ENCODE measurements at regions of chr17 and their contacts with region 1.

Region 1: DNA sequence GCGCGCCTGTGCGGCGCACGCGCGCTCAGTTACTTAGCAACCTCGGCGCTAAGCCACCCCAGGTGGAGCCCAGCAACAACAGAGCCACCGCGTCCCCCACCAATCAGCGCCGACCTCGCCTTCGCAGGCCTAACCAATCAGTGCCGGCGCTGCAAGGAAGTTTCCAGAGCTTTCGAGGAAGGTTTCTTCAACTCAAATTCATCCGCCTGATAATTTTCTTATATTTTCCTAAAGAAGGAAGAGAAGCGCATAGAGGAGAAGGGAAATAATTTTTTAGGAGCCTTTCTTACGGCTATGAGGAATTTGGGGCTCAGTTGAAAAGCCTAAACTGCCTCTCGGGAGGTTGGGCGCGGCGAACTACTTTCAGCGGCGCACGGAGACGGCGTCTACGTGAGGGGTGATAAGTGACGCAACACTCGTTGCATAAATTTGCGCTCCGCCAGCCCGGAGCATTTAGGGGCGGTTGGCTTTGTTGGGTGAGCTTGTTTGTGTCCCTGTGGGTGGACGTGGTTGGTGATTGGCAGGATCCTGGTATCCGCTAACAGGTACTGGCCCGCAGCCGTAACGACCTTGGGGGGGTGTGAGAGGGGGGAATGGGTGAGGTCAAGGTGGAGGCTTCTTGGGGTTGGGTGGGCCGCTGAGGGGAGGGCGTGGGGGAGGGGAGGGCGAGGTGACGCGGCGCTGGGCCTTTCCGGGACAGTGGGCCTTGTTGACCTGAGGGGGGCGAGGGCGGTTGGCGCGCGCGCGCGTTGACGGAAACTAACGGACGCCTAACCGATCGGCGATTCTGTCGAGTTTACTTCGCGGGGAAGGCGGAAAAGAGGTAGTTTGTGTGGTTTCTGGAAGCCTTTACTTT is at the start of gene UBB:
- DNase-seq: peak; percentile 98
- ATAC-seq: peak; percentile 98 to 99 (median 99)
- H3K4me3 ChIP-seq: peak within 1 kb of the TSS; percentile 45 to 83 (median 72)
- H3K27ac ChIP-seq: peak within 1 kb of the TSS; percentile 88 to 99 (median 95)
- H3K4me1 ChIP-seq: peaks cover 10 to 35% (median 25%) of the 10 kb centered on the region in 12 donors
- H3K27me3 ChIP-seq: no peaks in the 10 kb centered on the region
- CTCF ChIP-seq: peak in 3 of 12 donors; percentile 10 to 17 (median 13)
- POLR2A ChIP-seq: peak; percentile 70 to 97
- total RNA-seq, gene UBB: 665 to 2,180 (median 1,547) TPM

Region 2: DNA sequence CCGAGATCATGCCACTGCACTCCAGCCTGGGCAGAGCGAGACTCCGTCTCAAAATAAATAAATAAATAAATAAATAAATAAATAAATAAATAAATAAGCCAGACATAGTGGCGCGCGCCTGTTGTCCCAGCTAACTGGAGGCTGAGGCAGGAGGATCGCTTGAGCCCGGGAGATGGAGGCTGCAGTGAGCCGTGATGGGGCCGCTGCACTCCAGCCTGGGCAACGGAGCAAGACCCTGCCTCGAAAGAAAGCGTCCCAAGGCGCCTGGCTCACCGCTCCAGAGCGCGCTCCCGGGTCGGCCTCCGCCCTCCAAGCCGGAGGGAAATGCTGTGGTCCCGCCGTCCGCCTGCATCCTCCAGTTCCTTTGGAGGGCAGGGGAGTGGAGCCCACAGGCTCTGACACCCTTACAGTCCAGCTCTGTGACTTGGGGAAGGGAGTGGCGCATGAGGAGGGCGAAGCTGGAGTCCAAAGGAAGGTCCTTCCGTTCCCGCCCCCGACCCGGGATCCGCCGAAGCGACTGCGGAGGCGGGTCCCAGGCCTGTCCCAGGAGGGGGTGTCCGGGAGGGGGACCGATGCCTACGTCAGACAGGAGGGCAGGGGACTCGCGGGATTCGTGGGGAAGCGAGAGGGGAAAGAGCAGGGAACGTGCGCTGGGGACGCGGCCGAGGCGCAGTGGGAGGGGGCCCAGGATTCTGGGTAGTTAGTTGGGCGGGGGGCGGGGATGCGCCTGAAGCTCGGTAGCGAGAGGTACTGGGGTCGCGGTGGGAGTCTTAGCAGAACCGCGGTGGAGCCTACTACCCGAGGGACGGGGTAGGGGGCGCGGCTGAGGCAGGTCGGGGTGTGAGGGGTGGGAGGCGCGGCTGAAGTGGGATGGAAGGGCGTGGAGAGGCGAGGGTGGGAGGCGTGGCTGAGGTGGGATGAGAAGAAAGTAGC is 26.1 kb after region 1 on chr17:
- intact Hi-C with region 1: loop called in 1 of 10 experiments (anchors 1 kb)
- DNase-seq: peak; percentile 75 to 86 (median 78)
- ATAC-seq: peak; percentile 76 to 94 (median 82)
- H3K4me3 ChIP-seq: peak overlapping the region; percentile 36 to 79 (median 58)
- H3K27ac ChIP-seq: peak overlapping the region; percentile 37 to 92 (median 80)
- H3K4me1 ChIP-seq: peaks cover 0 to 20% (median 8%) of the 10 kb centered on the region in 12 donors
- H3K27me3 ChIP-seq: no peaks in the 10 kb centered on the region
- CTCF ChIP-seq: no peak
- POLR2A ChIP-seq: peak in 1 of 2 donors; percentile 26

Region 3: GRCh38 chr17:16415031-16415924 is 34.4 kb after region 1 on chr17 and contains the start of gene TRPV2:
- intact Hi-C with region 1: loop called in 3 of 10 experiments (anchors 2 to 5 kb)
- DNase-seq: peak; percentile 48 to 82 (median 59)
- ATAC-seq: peak; percentile 16 to 77 (median 40)
- H3K4me3 ChIP-seq: peak within 1 kb of the TSS; percentile 37 to 93 (median 68)
- H3K27ac ChIP-seq: peak within 1 kb of the TSS; percentile 56 to 98 (median 89)
- H3K4me1 ChIP-seq: peaks cover 0 to 44% (median 20%) of the 10 kb centered on the region in 12 donors
- H3K27me3 ChIP-seq: no peaks in the 10 kb centered on the region
- CTCF ChIP-seq: peak in 7 of 12 donors; percentile 11 to 39 (median 32)
- POLR2A ChIP-seq: no peak
- total RNA-seq, gene TRPV2: 5.8 to 43.5 (median 11.5) TPM

Region 4: DNA sequence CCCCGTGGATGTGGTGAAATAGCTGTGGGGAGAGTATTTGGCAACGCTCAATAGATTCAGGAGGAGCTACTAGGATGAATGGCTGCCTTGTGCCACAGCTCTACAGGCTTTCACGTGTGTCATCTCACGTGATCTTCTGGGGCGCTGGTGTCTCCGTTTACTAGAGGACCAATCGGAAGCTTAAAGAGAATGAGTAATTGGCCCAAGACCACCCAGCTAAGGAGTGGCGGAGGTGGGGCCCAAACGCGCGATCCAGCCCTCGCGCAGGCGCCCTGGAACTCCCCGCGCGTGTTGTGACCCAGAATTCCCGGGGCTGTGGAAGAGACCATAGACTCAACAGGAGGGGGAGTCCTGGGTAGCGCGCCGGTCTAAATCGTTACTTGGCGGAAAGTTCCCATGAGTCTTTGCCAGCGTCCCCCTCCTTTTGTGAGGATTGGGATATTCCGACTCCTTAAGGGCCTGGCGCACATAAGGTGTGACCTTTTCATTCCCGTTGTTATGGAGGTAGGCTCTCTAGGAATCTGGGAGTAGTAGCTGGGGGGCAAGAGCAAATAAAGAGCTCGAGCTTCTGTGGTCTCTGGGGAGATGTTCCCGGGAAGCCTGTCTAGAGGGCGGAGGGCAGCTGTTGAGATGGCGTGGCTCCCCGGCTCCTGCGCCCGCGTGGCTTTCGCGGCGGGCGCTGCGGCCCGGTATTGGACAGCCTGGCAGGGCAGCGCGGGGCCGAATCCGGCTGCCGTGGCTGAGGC is 57.9 kb after region 1 on chr17:
- intact Hi-C with region 1: loop called in 4 of 10 experiments (anchors 2 to 10 kb)
- DNase-seq: peak; percentile 94 to 97 (median 96)
- ATAC-seq: peak; percentile 92 to 97 (median 95)
- H3K4me3 ChIP-seq: peak overlapping the region; percentile 71 to 100 (median 86)
- H3K27ac ChIP-seq: peak overlapping the region; percentile 34 to 93 (median 86)
- H3K4me1 ChIP-seq: peaks cover 6 to 43% (median 28%) of the 10 kb centered on the region in 12 donors
- H3K27me3 ChIP-seq: no peaks in the 10 kb centered on the region
- CTCF ChIP-seq: no peak
- POLR2A ChIP-seq: peak in 1 of 2 donors; percentile 64

Region 5: GRCh38 chr17:16456742-16457316 is 76.0 kb after region 1 on chr17:
- intact Hi-C with region 1: loop called in 1 of 10 experiments (anchors 5 kb)
- DNase-seq: no peak
- ATAC-seq: no peak
- H3K4me3 ChIP-seq: no peak overlapping the region
- H3K27ac ChIP-seq: no peak overlapping the region
- H3K4me1 ChIP-seq: peaks cover 0 to 17% (median 4%) of the 10 kb centered on the region in 12 donors
- H3K27me3 ChIP-seq: no peaks in the 10 kb centered on the region
- CTCF ChIP-seq: peak in 1 of 12 donors; percentile 14
- POLR2A ChIP-seq: no peak

Region 6: GRCh38 chr17:16486373-16487250 is 105.7 kb after region 1 on chr17:
- intact Hi-C with region 1: no loop called
- DNase-seq: peak; percentile 78 to 89 (median 83)
- ATAC-seq: peak; percentile 72 to 82 (median 74)
- H3K4me3 ChIP-seq: peak overlapping the region in 7 of 12 donors; percentile 9 to 38 (median 12)
- H3K27ac ChIP-seq: peak overlapping the region in 9 of 12 donors; percentile 25 to 81 (median 45)
- H3K4me1 ChIP-seq: peaks cover 3 to 42% (median 25%) of the 10 kb centered on the region in 12 donors
- H3K27me3 ChIP-seq: no peaks in the 10 kb centered on the region
- CTCF ChIP-seq: no peak
- POLR2A ChIP-seq: no peak

Region 7: DNA sequence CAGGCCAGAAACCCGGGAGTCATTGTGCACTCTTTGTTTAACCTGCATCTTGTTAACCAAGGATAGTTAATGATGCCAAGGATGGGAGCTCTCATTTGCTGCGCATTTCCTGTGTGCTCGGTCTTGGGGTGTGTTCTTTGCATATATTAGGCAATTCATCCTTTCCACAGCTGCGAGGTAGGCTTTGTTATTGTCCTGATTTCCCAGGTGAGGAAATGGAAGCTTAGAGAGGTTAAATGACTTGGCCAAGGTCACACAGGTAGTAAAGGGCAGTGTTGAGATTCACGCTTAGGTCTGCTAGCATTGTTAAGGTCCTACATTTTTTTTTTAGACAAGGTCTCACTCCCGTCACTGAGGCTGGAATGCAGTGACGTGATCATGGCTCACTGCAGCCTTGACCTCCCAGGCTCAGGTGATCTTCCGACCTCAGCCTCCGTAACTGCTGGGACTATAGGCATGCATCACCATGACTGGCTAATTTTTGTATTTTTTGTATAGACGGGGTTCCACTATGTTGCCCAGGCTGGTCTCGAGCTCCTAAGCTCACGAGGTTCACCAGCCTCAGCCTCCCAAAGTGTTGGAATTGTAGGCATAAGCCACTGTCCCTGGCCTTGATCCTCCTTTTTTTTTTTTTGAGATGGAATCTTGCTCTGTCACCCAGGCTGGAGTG is 116.1 kb after region 1 on chr17:
- intact Hi-C with region 1: no loop called
- DNase-seq: no peak
- ATAC-seq: no peak
- H3K4me3 ChIP-seq: no peak overlapping the region
- H3K27ac ChIP-seq: no peak overlapping the region
- H3K4me1 ChIP-seq: peaks cover 0 to 4% (median 0%) of the 10 kb centered on the region in 12 donors
- H3K27me3 ChIP-seq: peaks cover 0 to 10% (median 0%) of the 10 kb centered on the region in 9 donors
- CTCF ChIP-seq: no peak
- POLR2A ChIP-seq: no peak